ENCODE measurements at regions of chr1 and their contacts with region 1.

Region 1: GRCh38 chr1:179293340-179294327 is at the start of gene SOAT1:
- DNase-seq: peak; percentile 76 to 96
- H3K4me3 ChIP-seq: peak within 1 kb of the TSS; percentile 88 to 94
- H3K27ac ChIP-seq: peak within 1 kb of the TSS; percentile 93 to 97
- H3K4me1 ChIP-seq: peaks cover 3 to 10% of the 10 kb centered on the region in 2 donors
- H3K27me3 ChIP-seq: no peaks in the 10 kb centered on the region
- CTCF ChIP-seq: peak in 1 of 3 experiments; percentile 10
- total RNA-seq, gene SOAT1: 10.6 TPM

Region 2: GRCh38 chr1:178644308-178645120 is 649.1 kb before region 1 on chr1:
- intact Hi-C with region 1: no loop called
- DNase-seq: no peak
- H3K4me3 ChIP-seq: no peak overlapping the region
- H3K27ac ChIP-seq: no peak overlapping the region
- H3K4me1 ChIP-seq: no peaks in the 10 kb centered on the region
- H3K27me3 ChIP-seq: no peaks in the 10 kb centered on the region
- CTCF ChIP-seq: no peak

Region 3: DNA sequence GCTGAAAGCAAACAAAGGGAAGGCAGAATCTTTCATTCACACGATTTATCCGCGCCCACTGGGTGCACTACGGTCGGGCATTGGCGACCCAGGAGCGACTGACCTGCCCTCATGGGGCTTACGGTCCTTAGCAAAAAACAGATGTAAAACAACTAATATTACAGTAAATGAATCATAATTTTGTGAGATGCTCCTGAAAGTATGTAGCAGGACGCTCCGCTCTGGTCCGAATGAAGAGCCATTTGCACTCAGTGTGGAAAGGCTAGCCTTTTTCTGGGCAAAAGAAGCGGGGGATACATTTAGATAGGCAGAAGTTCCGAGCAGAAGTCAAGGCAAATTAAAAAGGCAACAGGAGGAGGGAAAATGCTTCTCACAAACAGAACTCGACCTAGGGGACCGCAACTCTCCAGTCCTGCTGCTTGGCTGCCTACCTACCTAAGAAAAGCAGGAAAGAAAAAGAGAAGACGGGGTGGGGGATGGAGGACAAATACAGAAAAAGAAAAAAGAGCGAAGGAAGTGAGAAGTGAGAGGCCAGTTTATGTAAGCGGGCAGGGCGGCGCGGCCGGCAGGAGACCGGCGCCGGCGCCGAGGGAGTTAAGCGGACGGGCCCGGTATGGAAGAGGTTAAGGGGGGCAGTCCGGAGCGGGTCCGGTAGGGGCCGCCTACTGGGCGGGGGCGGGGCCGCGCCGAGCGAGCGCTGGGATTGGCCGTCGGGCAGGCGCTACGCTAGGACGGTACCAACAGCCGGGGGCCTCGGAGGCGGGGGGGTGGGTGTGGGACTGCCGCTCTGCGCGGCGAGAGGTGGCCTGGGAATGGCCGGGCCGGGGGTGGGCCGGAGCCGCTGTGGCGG is 268.3 kb before region 1 on chr1 and contains the start of gene FAM20B:
- intact Hi-C with region 1: loop called (anchors 5 kb)
- DNase-seq: peak; percentile 68 to 96
- H3K4me3 ChIP-seq: peak within 1 kb of the TSS; percentile 91 to 97
- H3K27ac ChIP-seq: peak within 1 kb of the TSS; percentile 95 to 97
- H3K4me1 ChIP-seq: peaks cover 0 to 3% of the 10 kb centered on the region in 2 donors
- H3K27me3 ChIP-seq: no peaks in the 10 kb centered on the region
- CTCF ChIP-seq: no peak
- total RNA-seq, gene FAM20B: 17.3 TPM

Region 4: GRCh38 chr1:179121159-179121938 is 172.3 kb before region 1 on chr1:
- intact Hi-C with region 1: loop called (anchors 1 kb)
- DNase-seq: no peak
- H3K4me3 ChIP-seq: no peak overlapping the region
- H3K27ac ChIP-seq: peak overlapping the region in 1 of 2 donors; percentile 20
- H3K4me1 ChIP-seq: peaks cover 0 to 6% of the 10 kb centered on the region in 2 donors
- H3K27me3 ChIP-seq: no peaks in the 10 kb centered on the region
- CTCF ChIP-seq: peak; percentile 34 to 66 (median 44)

Region 5: DNA sequence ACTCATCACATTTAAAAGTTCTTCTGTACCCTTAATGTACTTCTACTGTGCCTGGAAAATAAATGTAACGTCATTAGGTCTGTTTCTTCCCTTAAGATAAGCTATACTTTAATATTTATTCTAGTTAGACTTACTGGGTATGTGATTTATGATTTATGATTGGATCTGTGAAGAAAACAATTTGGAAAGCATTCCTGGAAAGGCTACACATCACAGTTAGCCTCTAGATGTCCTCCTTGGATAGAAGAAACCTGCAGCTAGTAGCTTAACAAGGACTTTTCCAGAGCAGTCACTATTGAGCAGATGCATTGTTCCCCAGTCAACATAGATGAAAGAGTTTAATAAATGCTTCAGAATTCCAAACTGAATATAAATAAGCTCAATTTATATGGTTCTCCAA is 42.0 kb before region 1 on chr1:
- intact Hi-C with region 1: loop called (anchors 5 kb)
- DNase-seq: no peak
- H3K4me3 ChIP-seq: no peak overlapping the region
- H3K27ac ChIP-seq: no peak overlapping the region
- H3K4me1 ChIP-seq: no peaks in the 10 kb centered on the region
- H3K27me3 ChIP-seq: no peaks in the 10 kb centered on the region
- CTCF ChIP-seq: peak in 1 of 3 experiments; percentile 39

Region 6: GRCh38 chr1:179743679-179744400 is 450.2 kb after region 1 on chr1:
- intact Hi-C with region 1: no loop called
- DNase-seq: no peak
- H3K4me3 ChIP-seq: peak overlapping the region; percentile 36 to 58
- H3K27ac ChIP-seq: no peak overlapping the region
- H3K4me1 ChIP-seq: peaks cover 7 to 9% of the 10 kb centered on the region in 2 donors
- H3K27me3 ChIP-seq: no peaks in the 10 kb centered on the region
- CTCF ChIP-seq: no peak

Region 7: DNA sequence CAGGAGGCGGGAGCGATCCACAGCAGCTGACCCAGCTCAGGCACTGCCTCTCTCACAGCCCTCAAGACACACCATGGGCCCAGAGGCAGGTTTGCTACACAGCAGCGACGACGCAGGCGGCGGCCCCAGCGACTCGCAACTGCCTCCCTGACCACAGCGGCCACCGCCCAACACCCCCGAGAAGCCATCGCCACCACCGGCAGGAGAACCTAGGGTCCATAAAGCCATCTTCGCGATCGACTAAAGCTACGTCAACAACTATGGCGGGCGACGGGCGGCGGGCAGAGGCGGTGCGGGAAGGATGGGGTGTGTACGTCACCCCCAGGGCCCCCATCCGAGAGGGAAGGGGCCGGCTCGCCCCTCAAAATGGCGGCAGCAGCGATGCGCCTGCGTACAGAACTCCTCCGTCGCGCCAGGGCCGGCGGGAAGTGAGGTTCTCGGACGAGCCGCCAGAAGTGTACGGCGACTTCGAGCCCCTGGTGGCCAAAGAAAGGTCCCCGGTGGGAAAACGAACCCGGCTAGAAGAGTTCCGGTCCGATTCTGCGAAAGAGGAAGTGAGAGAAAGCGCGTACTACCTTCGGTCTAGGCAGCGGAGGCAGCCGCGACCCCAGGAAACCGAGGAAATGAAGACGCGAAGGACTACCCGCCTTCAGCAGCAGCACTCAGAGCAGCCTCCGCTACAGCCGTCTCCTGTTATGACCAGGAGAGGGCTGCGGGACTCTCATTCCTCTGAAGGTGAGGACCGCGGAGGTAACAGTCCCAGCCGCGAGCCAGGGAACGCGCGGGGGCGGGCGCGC is 588.8 kb after region 1 on chr1 and contains the start of gene TOR1AIP1:
- intact Hi-C with region 1: loop called (anchors 10 kb)
- DNase-seq: peak; percentile 85 to 98
- H3K4me3 ChIP-seq: peak within 1 kb of the TSS; percentile 83 to 93
- H3K27ac ChIP-seq: peak within 1 kb of the TSS; percentile 97 to 100
- H3K4me1 ChIP-seq: peaks cover 4 to 21% of the 10 kb centered on the region in 2 donors
- H3K27me3 ChIP-seq: no peaks in the 10 kb centered on the region
- CTCF ChIP-seq: peak; percentile 24 to 64 (median 43)
- total RNA-seq, gene TOR1AIP1: 46.6 TPM